ENCODE measurements at regions of chr7 and their contacts with region 1.

Region 1: DNA sequence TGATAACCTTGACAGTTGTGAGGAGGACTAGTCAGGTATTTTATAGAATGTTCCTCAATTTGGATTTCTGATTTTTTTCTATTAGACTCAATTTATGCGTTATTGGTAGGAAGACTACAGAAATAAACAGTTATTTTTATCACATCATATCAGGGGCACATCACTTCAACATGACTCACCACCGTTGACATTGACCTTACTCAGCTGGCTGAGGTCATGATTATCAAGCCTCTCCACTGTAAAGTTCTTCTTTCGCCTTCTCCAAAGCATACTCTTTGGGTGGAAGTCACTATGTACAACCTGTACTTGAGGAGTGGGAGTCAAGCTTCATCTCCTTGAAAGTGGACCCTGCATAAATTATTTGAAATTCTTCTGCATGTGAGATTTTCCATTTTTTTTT is 194.3 kb upstream of the IGFBP3 start:
- DNase-seq: no peak
- H3K4me3 ChIP-seq: no peak overlapping the region
- H3K27ac ChIP-seq: no peak overlapping the region
- H3K4me1 ChIP-seq: no peaks in the 10 kb centered on the region
- H3K27me3 ChIP-seq: no peaks in the 10 kb centered on the region
- CTCF ChIP-seq: no peak
- EP300 ChIP-seq: no peak
- POLR2A ChIP-seq: no peak

Region 2: DNA sequence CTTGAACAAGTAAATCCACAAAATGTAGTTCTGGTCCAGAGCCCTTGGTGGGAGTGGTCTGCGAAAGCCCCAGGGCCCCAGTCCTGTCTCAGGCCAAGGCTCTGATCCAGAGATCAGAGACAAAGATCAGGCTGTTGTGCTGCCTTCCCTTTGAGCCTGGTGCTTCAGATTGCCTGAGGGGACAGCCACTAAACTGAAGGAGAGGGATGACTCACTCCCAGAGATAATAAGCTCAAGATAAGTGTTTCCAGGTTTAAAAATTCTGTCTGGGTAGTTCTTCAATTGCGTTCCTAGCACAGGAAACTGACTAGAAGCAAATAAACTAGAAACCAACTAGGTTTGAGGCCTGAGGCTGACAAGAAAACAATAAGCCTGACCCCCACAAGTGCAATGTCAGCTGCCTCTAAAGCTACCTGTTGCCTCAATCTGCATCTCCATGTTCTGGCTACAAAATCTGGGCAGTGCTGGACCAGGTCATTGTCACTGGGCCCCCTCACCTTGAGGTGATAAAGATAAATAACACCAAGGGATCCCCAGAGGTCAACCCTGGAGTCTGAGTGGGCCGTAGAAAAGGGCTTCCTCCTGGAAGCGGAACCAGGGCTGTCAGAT is 767.5 kb before region 1 on chr7:
- intact Hi-C with region 1: no loop called
- DNase-seq: no peak
- H3K4me3 ChIP-seq: no peak overlapping the region
- H3K27ac ChIP-seq: no peak overlapping the region
- H3K4me1 ChIP-seq: no peaks in the 10 kb centered on the region
- H3K27me3 ChIP-seq: no peaks in the 10 kb centered on the region
- CTCF ChIP-seq: no peak
- EP300 ChIP-seq: no peak
- POLR2A ChIP-seq: no peak

Region 3: GRCh38 chr7:46321556-46322205 is 206.3 kb after region 1 on chr7:
- intact Hi-C with region 1: loop called in 1 of 4 experiments (anchors 1 kb)
- DNase-seq: no peak
- H3K4me3 ChIP-seq: no peak overlapping the region
- H3K27ac ChIP-seq: no peak overlapping the region
- H3K4me1 ChIP-seq: no peaks in the 10 kb centered on the region
- H3K27me3 ChIP-seq: no peaks in the 10 kb centered on the region
- CTCF ChIP-seq: no peak
- EP300 ChIP-seq: no peak
- POLR2A ChIP-seq: no peak